K562 (cell line): ENCODE measurements at regions of chr12 and their contacts with region 1.

Region 1: DNA sequence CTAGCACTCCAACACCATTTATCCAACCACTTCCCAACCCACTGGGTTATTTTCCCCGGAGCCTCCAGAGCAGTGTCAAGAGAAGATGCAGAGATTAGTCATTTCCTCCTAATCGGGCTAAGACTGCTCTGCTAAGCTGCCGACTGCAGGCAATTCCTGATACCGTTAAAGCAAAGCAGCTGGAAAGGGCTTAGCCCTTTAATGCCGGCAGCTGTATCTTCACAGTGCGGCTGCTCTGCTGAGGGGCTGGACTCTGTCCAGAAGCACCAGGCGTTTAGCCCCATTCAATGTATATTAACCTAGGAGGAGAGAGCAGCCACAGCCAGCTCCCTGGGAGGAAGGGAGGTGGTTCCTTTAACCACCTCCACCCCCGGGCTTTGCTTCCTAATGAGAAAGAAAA is 11.1 kb downstream of the AQP6 start:
- DNase-seq: peak in 3 of 4 experiments; percentile 30 to 80 (median 65)
- ATAC-seq: peak; percentile 88
- H3K4me3 ChIP-seq: no peak overlapping the region
- H3K27ac ChIP-seq: no peak overlapping the region
- H3K4me1 ChIP-seq: peaks cover 26% of the 10 kb centered on the region in 2 experiments
- H3K27me3 ChIP-seq: no peaks in the 10 kb centered on the region
- CTCF ChIP-seq: 0 out of 6 replicates have a peak, but pooled peaks of 1 of the 3 experiments have one; percentile 11
- EP300 ChIP-seq: no peak; the same call in 1 of the 2 replicates
- POLR2A ChIP-seq: no peak
- RAD21 ChIP-seq: 0 out of 4 replicates have a peak, but pooled peaks of 1 of the 2 experiments have one; percentile 20

Region 2: GRCh38 chr12:50006789-50007436 is 23.0 kb after region 1 on chr12:
- CTCF ChIA-PET with region 1: no interaction called
- POLR2A ChIA-PET with region 1: interaction called, 14 read pairs
- in situ Hi-C with region 1: no loop called
- intact Hi-C with region 1: no loop called
- DNase-seq: no peak
- ATAC-seq: no peak
- H3K4me3 ChIP-seq: no peak overlapping the region
- H3K27ac ChIP-seq: no peak overlapping the region
- H3K4me1 ChIP-seq: no peaks in the 10 kb centered on the region; a peak in 1 of 5 replicates
- H3K27me3 ChIP-seq: no peaks in the 10 kb centered on the region
- CTCF ChIP-seq: no peak
- EP300 ChIP-seq: no peak
- POLR2A ChIP-seq: no peak
- RAD21 ChIP-seq: no peak

Region 3: GRCh38 chr12:50025187-50026059 is 41.5 kb after region 1 on chr12 and contains the start of gene RACGAP1:
- CTCF ChIA-PET with region 1: no interaction called
- POLR2A ChIA-PET with region 1: interaction called, 6 read pairs
- in situ Hi-C with region 1: no loop called
- intact Hi-C with region 1: loop called (anchors 5 kb)
- DNase-seq: peak; percentile 93 to 99 (median 96)
- ATAC-seq: peak; percentile 98
- H3K4me3 ChIP-seq: peak within 1 kb of the TSS; percentile 71
- H3K27ac ChIP-seq: peak within 1 kb of the TSS; percentile 89
- H3K4me1 ChIP-seq: peaks cover 7 to 11% of the 10 kb centered on the region in 2 experiments; a peak in 3 of 5 replicates
- H3K27me3 ChIP-seq: no peaks in the 10 kb centered on the region
- CTCF ChIP-seq: no peak
- EP300 ChIP-seq: peak; percentile 43
- POLR2A ChIP-seq: peak; percentile 91
- RAD21 ChIP-seq: no peak; a peak in 1 of 4 replicates
- polyA plus RNA-seq, gene RACGAP1: 56.4 to 71.8 TPM

Region 4: DNA sequence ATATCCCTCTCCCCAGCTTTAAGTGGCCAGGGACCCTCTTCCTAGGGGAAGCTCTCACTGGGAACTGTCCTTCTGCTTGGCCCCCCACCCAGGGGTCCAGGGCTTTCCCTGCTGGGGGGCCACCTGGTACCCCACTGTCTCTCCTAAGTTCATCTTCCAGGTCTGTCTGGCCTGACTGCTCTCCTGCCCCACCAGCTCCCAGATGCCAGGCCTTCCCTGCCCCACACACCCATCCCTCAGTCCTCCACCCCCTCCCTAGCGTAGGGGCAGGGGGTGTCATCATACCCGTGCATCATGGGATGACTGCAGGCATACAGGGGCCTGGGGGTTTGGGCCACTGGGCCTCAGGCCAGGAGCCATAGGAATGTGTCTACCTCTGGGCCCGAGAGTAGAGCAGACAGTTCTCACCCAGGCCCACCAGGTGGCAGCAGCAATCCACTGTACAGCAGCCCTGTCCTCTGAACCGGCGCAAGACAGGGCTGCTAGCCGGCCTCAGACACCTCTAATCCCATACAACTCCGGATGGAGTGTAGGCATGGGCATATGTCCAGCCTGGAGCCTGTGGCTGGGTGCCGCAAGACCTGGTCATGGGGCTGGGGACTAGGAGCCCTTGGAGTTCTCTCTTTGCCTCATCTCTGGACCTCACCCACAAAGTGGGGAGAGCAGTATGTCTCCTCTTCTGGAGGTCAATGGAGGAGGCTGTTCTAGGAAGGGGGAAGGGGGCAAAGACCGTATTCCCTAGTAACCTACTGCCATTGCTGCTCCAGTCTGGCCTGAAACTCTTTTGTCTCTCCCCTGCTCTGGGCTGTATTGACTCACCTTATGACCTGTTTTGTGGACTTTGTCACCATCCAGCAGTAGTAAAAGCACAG is 91.3 kb after region 1 on chr12:
- CTCF ChIA-PET with region 1: no interaction called
- POLR2A ChIA-PET with region 1: no interaction called
- in situ Hi-C with region 1: no loop called
- intact Hi-C with region 1: no loop called
- DNase-seq: peak; percentile 82 to 89 (median 82)
- ATAC-seq: peak; percentile 94
- H3K4me3 ChIP-seq: no peak overlapping the region
- H3K27ac ChIP-seq: no peak overlapping the region
- H3K4me1 ChIP-seq: peaks cover 23 to 24% of the 10 kb centered on the region in 2 experiments; a peak in 4 of 5 replicates
- H3K27me3 ChIP-seq: no peaks in the 10 kb centered on the region
- CTCF ChIP-seq: peak; percentile 90 to 95 (median 94)
- EP300 ChIP-seq: no peak
- POLR2A ChIP-seq: no peak
- RAD21 ChIP-seq: peak; percentile 91 to 97